Calu3 (cell line): ENCODE measurements at regions of chr22 and their contacts with region 1.

Region 1: DNA sequence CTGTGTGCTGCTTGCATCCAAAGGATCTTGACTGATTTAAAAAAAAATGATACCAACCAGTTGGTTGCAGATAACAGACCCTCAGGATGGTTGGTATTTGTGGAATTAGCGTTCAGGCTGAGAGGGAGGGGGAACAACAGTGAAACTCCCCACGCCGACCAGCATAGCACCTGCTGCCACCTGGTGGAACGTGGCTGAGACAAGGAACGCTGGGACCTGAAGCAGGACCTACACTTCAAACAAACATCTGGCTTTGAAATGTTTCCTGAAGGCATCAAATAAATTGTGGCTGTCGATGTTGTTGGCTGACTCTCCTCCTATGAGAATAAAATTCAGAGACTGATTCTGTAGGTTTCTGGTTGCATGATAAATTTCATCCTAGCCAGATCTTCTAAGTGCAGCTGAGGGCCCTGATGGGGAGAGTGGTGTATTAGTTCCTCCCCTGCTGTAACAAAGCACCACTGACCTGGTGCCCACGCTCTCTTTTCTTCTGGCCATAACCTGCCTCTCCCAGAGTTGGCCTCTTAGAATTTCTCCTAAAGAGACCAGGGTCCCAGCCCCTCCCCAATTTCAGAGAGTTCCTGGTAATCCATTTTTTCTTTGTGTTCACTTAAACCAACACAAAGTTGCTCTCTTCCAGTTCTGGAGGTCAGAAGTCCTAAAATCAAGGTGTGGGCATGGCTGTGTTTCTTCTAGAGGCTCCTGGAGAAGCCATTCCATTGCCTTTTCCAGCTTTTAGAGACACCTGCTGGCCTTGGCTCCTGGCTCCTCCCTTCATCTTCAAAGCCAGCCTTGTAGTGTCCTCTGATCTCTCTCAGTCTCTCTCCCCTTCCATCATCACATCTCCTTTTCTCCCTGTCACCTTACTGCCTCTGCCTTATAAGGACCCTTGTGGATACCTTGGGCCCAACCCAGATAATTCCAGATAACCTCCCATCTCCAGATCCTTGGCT is 17.3 kb downstream of the APOL2 start:
- DNase-seq: peak; percentile 70
- H3K4me3 Mint-ChIP-seq: no peak overlapping the region
- H3K27ac Mint-ChIP-seq: no peak overlapping the region
- H3K4me1 Mint-ChIP-seq: peaks cover 34% of the 10 kb centered on the region
- H3K27me3 Mint-ChIP-seq: peaks cover 24% of the 10 kb centered on the region
- CTCF ChIP-seq: peak; percentile 71

Region 2: GRCh38 chr22:36110306-36110881 is 111.7 kb before region 1 on chr22:
- CTCF ChIA-PET with region 1: no interaction called
- intact Hi-C with region 1: no loop called
- DNase-seq: no peak
- H3K4me3 Mint-ChIP-seq: no peak overlapping the region
- H3K27ac Mint-ChIP-seq: no peak overlapping the region
- H3K4me1 Mint-ChIP-seq: no peaks in the 10 kb centered on the region
- H3K27me3 Mint-ChIP-seq: peaks cover 19% of the 10 kb centered on the region
- CTCF ChIP-seq: no peak

Region 3: GRCh38 chr22:36194971-36195370 is 27.1 kb before region 1 on chr22:
- CTCF ChIA-PET with region 1: interaction called, 5 read pairs
- intact Hi-C with region 1: loop called (anchors 2 kb)
- DNase-seq: peak; percentile 63
- H3K4me3 Mint-ChIP-seq: no peak overlapping the region
- H3K27ac Mint-ChIP-seq: no peak overlapping the region
- H3K4me1 Mint-ChIP-seq: peaks cover 10% of the 10 kb centered on the region
- H3K27me3 Mint-ChIP-seq: peaks cover 44% of the 10 kb centered on the region
- CTCF ChIP-seq: peak; percentile 66

Region 4: DNA sequence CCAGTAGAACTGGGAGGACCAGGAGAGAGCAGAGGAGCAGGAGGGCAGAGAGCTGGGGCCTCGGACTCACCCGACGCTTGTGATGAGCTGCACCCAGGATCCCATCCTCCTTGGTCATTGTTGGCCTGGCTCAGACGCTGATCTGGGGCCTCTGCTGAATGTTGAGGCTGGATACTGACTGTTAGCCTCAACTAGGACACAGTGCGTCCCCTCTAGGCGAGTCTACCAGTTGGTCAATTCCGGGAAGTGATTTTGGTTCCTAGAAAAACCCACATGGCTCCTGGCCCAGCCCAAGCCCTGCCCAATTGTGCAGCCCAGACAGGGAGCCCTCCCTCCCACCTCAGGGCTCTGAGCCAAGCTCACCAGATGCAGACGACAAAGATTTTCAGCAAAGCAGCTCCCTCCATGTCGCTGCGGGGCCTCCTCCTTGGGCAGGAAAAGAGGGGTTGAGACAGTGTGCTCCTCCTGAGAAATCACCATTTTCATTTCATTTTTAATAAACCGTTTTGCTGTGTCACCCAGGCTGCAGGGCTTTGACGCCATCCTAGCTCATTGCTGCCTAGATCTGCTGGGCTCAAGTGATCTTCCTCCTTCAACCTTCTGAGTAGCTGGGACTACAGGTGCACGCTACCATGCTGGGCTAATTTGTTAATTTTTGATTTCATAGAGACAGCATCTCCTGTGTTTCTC is 20.3 kb before region 1 on chr22 and contains the start of gene APOL4:
- CTCF ChIA-PET with region 1: interaction called, 5 read pairs
- intact Hi-C with region 1: loop called (anchors 2 kb)
- DNase-seq: no peak
- H3K4me3 Mint-ChIP-seq: no peak within 1 kb of the TSS
- H3K27ac Mint-ChIP-seq: no peak within 1 kb of the TSS
- H3K4me1 Mint-ChIP-seq: peaks cover 28% of the 10 kb centered on the region
- H3K27me3 Mint-ChIP-seq: no peaks in the 10 kb centered on the region
- CTCF ChIP-seq: no peak
- total RNA-seq, gene APOL4: 1.5 and 4.3 TPM in 2 replicates